ENCODE measurements at regions of chr13 and their contacts with region 1.

Region 1: DNA sequence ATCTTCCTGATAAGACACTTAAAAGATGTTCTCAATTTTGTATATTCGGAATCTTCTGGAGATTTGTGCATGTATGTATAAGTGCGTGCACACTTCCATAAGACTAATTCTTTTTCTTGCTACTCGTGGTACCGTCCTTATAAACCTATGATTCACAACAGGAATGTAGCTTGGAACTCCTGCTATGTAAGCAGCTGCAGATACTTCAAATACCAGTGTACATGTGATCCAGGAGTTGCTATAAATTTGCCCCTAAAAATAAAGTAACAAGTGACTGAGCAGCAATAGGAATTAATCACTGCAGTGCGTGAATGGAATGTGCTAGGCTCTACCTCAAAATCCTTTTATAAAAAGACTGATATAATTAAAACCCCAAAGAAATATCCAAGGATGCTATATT is 214.9 kb downstream of the KLF5 start:
- DNase-seq: no peak
- ATAC-seq: no peak
- H3K4me3 ChIP-seq: no peak overlapping the region
- H3K27ac ChIP-seq: no peak overlapping the region
- H3K4me1 ChIP-seq: no peaks in the 10 kb centered on the region
- H3K27me3 ChIP-seq: no peaks in the 10 kb centered on the region

Region 2: GRCh38 chr13:72727417-72728289 is 546.1 kb before region 1 on chr13 and contains the starts of genes BORA and MZT1:
- intact Hi-C with region 1: no loop called
- DNase-seq: peak; percentile 97 to 98
- ATAC-seq: peak; percentile 100
- H3K4me3 ChIP-seq: peak within 1 kb of the TSS; percentile 65 to 98
- H3K27ac ChIP-seq: peak within 1 kb of the TSS in 1 of 2 donors; percentile 39
- H3K4me1 ChIP-seq: no peaks in the 10 kb centered on the region
- H3K27me3 ChIP-seq: no peaks in the 10 kb centered on the region
- total RNA-seq, gene BORA: 1.5 to 2.6 TPM
- total RNA-seq, gene MZT1: 7.4 to 9.4 TPM

Region 3: DNA sequence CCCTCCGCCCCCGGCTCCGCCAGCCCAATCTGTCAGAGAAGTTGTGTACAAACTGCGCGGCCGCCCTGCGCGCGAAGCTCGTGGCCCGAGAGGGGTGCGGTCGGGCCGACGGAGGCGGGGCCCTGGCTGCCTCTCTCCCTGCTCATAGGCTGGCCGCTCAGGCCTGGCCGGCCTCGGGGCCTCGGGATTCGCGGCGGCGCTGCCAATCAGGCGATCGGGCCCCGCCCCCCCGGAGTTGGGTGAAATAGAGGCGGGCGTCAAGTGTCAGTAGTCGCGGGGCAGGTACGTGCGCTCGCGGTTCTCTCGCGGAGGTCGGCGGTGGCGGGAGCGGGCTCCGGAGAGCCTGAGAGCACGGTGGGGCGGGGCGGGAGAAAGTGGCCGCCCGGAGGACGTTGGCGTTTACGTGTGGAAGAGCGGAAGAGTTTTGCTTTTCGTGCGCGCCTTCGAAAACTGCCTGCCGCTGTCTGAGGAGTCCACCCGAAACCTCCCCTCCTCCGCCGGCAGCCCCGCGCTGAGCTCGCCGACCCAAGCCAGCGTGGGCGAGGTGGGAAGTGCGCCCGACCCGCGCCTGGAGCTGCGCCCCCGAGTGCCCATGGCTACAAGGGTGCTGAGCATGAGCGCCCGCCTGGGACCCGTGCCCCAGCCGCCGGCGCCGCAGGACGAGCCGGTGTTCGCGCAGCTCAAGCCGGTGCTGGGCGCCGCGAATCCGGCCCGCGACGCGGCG is 214.8 kb before region 1 on chr13 and contains the start of gene KLF5:
- intact Hi-C with region 1: loop called in 1 of 2 experiments (anchors 5 kb)
- DNase-seq: peak; percentile 97 to 98
- ATAC-seq: peak; percentile 99
- H3K4me3 ChIP-seq: peak within 1 kb of the TSS; percentile 70 to 86
- H3K27ac ChIP-seq: peak within 1 kb of the TSS; percentile 1 to 2
- H3K4me1 ChIP-seq: no peaks in the 10 kb centered on the region
- H3K27me3 ChIP-seq: no peaks in the 10 kb centered on the region
- total RNA-seq, gene KLF5: 3.6 to 4.9 TPM

Region 4: GRCh38 chr13:73341748-73342147 is 68.0 kb after region 1 on chr13:
- intact Hi-C with region 1: no loop called
- DNase-seq: no peak
- ATAC-seq: no peak
- H3K4me3 ChIP-seq: no peak overlapping the region
- H3K27ac ChIP-seq: no peak overlapping the region
- H3K4me1 ChIP-seq: no peaks in the 10 kb centered on the region
- H3K27me3 ChIP-seq: no peaks in the 10 kb centered on the region

Region 5: DNA sequence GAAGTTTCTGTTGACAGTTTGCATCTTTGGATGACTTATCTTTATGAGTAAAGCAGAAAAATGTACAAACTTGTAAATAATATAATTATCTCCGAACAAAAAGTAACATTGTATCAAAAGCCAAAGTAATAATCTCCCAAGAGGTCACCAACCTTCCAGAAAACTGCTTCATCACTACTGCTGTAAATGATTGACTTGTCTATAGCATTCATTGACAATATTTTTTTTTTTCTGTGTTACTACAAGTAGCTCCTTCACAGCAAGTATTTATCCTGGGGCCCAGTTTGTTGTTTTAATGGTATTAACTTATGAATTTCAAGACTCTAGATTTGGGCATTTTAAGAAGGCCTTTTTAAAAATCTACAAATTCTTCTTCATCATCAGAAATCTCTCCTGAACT is 618.1 kb after region 1 on chr13:
- intact Hi-C with region 1: no loop called
- DNase-seq: no peak
- ATAC-seq: no peak
- H3K4me3 ChIP-seq: no peak overlapping the region
- H3K27ac ChIP-seq: no peak overlapping the region
- H3K4me1 ChIP-seq: no peaks in the 10 kb centered on the region
- H3K27me3 ChIP-seq: no peaks in the 10 kb centered on the region

Measured in aorta (tissue), 5 donors.